Aorta (tissue), 5 donors: ENCODE measurements at regions of chr9 and their contacts with region 1.

Region 1: GRCh38 chr9:124133727-124134126 is 122.2 kb downstream of the LHX2 start:
- DNase-seq: peak in 1 of 2 donors; percentile 64
- ATAC-seq: no peak
- H3K4me3 ChIP-seq: no peak overlapping the region
- H3K27ac ChIP-seq: no peak overlapping the region
- H3K4me1 ChIP-seq: peaks cover 0 to 4% of the 10 kb centered on the region in 2 donors
- H3K27me3 ChIP-seq: no peaks in the 10 kb centered on the region

Region 2: DNA sequence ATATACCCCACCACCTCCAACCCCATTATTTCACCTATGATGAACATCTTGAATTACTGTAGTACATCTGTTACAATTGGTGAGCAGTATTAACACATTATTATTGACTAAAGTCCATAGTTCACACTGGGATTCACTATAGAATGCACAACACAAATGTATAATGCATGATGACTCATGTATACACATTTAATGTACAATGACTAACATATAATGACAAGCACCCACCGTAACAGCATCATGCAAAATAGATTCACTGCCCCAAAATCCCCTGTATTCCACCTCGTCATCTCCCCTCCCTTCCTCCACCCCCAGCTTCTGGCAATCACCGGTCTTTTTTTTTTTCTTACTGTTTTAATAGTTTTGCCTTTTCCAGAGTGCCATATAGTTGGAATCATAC is 77.0 kb after region 1 on chr9:
- intact Hi-C with region 1: no loop called
- DNase-seq: no peak
- ATAC-seq: no peak
- H3K4me3 ChIP-seq: no peak overlapping the region
- H3K27ac ChIP-seq: no peak overlapping the region
- H3K4me1 ChIP-seq: no peaks in the 10 kb centered on the region
- H3K27me3 ChIP-seq: no peaks in the 10 kb centered on the region

Region 3: DNA sequence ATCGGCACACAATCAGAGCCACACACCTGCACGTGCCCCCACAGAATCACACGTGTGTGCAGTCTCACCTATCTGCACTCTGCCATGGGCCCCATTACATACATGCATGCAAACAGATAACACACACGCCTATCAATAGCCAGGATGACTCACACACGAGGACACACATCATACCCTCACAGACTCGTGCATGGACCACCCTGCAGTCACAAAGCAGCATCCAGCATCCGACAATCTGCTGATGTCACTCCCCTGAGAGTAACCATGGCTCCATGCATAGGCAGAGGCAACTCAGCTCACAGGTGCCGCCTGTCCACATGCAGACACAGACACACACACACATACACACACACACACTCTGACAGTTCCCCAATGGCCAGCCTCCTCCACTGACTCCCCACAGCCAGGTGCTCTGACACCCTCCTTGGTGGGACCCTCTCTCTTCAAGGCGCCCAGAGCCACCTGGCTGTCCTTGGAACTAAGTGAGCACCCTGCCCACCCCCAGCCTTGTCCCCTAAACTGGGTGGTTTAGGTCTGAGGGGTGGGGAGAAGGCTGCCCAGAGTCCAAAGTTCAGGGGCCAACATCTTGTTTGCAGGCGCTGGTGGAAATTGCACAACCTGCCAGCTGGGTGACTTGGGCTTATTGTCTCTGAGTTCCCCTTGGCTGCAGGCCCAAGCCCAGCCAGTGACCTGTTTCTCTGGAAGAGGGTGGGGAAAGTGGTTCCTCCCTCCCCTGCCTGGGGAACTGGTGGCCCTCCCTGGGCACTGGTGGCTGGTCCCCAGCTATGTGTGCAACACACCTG is 89.4 kb after region 1 on chr9:
- intact Hi-C with region 1: loop called in 1 of 2 experiments (anchors 10 kb)
- DNase-seq: peak; percentile 85 to 93
- ATAC-seq: peak; percentile 54
- H3K4me3 ChIP-seq: no peak overlapping the region
- H3K27ac ChIP-seq: no peak overlapping the region
- H3K4me1 ChIP-seq: no peaks in the 10 kb centered on the region
- H3K27me3 ChIP-seq: no peaks in the 10 kb centered on the region